Testis (tissue), 5 donors: ENCODE measurements at regions of chr4 and their contacts with region 1.

Region 1: GRCh38 chr4:152850377-152850776 is 70.6 kb downstream of the ARFIP1 start:
- DNase-seq: no peak
- H3K4me3 ChIP-seq: no peak overlapping the region
- H3K27ac ChIP-seq: no peak overlapping the region
- H3K4me1 ChIP-seq: no peaks in the 10 kb centered on the region
- H3K27me3 ChIP-seq: no peaks in the 10 kb centered on the region
- CTCF ChIP-seq: no peak
- POLR2A ChIP-seq: no peak

Region 2: GRCh38 chr4:153115322-153116290 is 265.2 kb after region 1 on chr4:
- intact Hi-C with region 1: loop called (anchors 10 kb)
- DNase-seq: no peak
- H3K4me3 ChIP-seq: no peak overlapping the region
- H3K27ac ChIP-seq: no peak overlapping the region
- H3K4me1 ChIP-seq: no peaks in the 10 kb centered on the region
- H3K27me3 ChIP-seq: no peaks in the 10 kb centered on the region
- CTCF ChIP-seq: no peak
- POLR2A ChIP-seq: no peak